Activated naive CD4-positive, alpha-beta T cell treated with anti-CD3 and anti-CD28 coated beads, Interleukin-2, amount 10 ng/mL, durations not matched to agents 7 days and 5 days (primary cell): ENCODE measurements at regions of chr9 and their contacts with region 1.

Region 1: DNA sequence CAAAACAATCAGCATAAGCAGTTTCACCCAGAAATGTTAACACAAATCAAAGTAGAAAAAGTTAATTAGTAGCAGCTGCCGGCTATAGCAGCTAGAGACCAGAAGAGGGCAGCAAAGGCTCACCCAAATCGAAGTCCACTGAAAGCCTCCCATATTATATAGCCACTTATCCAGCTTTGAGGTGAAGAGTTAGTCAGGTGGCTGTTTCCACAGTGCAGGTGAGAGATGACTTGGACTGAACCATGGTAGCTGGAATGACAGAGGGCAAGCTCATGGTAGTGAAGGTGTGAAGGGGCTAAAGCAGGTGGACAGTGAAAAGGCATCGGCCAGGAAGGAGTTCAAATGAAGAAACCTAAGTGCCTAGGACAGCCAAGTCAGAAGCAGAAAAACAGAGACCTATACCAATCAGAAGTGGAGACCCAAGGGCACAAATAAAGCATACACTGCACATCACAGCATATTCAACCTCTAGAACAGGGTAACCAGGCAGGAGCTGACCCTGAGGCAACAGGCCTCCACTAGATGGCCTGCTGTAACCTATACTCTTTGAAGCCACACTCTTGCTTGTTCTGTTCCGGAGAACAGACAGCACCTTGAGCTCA is 7.2 kb upstream of the RNF38 start:
- DNase-seq: peak; percentile 76
- H3K4me3 Mint-ChIP-seq: no peak overlapping the region
- H3K27ac Mint-ChIP-seq: peak overlapping the region; percentile 56
- H3K4me1 Mint-ChIP-seq: peaks cover 10% of the 10 kb centered on the region
- H3K27me3 Mint-ChIP-seq: no peaks in the 10 kb centered on the region

Region 2: GRCh38 chr9:36284226-36284625 is 123.0 kb before region 1 on chr9:
- CTCF ChIA-PET with region 1: no interaction called
- DNase-seq: no peak
- H3K4me3 Mint-ChIP-seq: no peak overlapping the region
- H3K27ac Mint-ChIP-seq: no peak overlapping the region
- H3K4me1 Mint-ChIP-seq: no peaks in the 10 kb centered on the region
- H3K27me3 Mint-ChIP-seq: peaks cover 4% of the 10 kb centered on the region

Region 3: GRCh38 chr9:36306471-36307306 is 100.5 kb before region 1 on chr9:
- CTCF ChIA-PET with region 1: no interaction called
- DNase-seq: no peak
- H3K4me3 Mint-ChIP-seq: no peak overlapping the region
- H3K27ac Mint-ChIP-seq: no peak overlapping the region
- H3K4me1 Mint-ChIP-seq: peaks cover 17% of the 10 kb centered on the region
- H3K27me3 Mint-ChIP-seq: peaks cover 4% of the 10 kb centered on the region

Region 4: GRCh38 chr9:36423206-36423605 is 16.0 kb after region 1 on chr9:
- CTCF ChIA-PET with region 1: interaction called, 14 read pairs
- DNase-seq: no peak
- H3K4me3 Mint-ChIP-seq: no peak overlapping the region
- H3K27ac Mint-ChIP-seq: peak overlapping the region; percentile 58
- H3K4me1 Mint-ChIP-seq: peaks cover 17% of the 10 kb centered on the region
- H3K27me3 Mint-ChIP-seq: no peaks in the 10 kb centered on the region

Region 5: DNA sequence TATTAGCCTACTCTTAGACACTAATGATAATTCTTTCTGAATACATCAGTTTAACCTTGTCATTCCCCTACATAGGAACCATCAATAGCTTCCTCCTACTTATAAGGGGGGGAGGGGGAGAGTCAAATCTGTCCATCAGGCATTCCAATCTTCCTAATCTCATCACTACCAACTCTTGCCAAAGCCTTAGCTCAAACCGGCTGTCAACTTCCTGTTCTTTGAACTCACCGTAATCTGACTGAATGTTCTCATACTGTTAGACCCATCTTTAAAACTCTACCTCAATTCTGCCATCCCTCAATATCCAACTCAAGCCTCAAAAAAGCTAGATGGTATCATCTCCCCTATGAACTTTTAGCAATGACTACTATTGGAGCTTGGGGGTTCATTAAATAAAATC is 34.7 kb after region 1 on chr9:
- CTCF ChIA-PET with region 1: interaction called, 26 read pairs
- DNase-seq: no peak
- H3K4me3 Mint-ChIP-seq: no peak overlapping the region
- H3K27ac Mint-ChIP-seq: no peak overlapping the region
- H3K4me1 Mint-ChIP-seq: peaks cover 24% of the 10 kb centered on the region
- H3K27me3 Mint-ChIP-seq: no peaks in the 10 kb centered on the region

Region 6: GRCh38 chr9:36457836-36458429 is 50.7 kb after region 1 on chr9:
- CTCF ChIA-PET with region 1: interaction called, 47 read pairs
- DNase-seq: no peak
- H3K4me3 Mint-ChIP-seq: peak overlapping the region; percentile 53
- H3K27ac Mint-ChIP-seq: peak overlapping the region; percentile 83
- H3K4me1 Mint-ChIP-seq: peaks cover 59% of the 10 kb centered on the region
- H3K27me3 Mint-ChIP-seq: no peaks in the 10 kb centered on the region

Region 7: GRCh38 chr9:36560857-36561221 is 153.6 kb after region 1 on chr9:
- CTCF ChIA-PET with region 1: interaction called, 175 read pairs
- DNase-seq: no peak
- H3K4me3 Mint-ChIP-seq: no peak overlapping the region
- H3K27ac Mint-ChIP-seq: no peak overlapping the region
- H3K4me1 Mint-ChIP-seq: peaks cover under 1% of the 10 kb centered on the region
- H3K27me3 Mint-ChIP-seq: peaks cover 5% of the 10 kb centered on the region